Breast epithelium (tissue), 4 donors: ENCODE measurements at regions of chr1 and their contacts with region 1.

Region 1: GRCh38 chr1:36099681-36100341 is 11.1 kb downstream of the ADPRS start:
- DNase-seq: peak; percentile 64 to 77
- H3K4me3 ChIP-seq: peak overlapping the region in 1 of 3 donors; percentile 39
- H3K27ac ChIP-seq: peak overlapping the region in 1 of 2 donors; percentile 15
- H3K4me1 ChIP-seq: peaks cover 0 to under 1% of the 10 kb centered on the region in 2 donors
- H3K27me3 ChIP-seq: no peaks in the 10 kb centered on the region
- CTCF ChIP-seq: peak; percentile 87 to 92 (median 91)
- POLR2A ChIP-seq: no peak

Region 2: GRCh38 chr1:36285448-36286101 is 185.8 kb after region 1 on chr1:
- intact Hi-C with region 1: loop called (anchors 5 kb)
- DNase-seq: peak in 1 of 2 donors; percentile 75
- H3K4me3 ChIP-seq: no peak overlapping the region
- H3K27ac ChIP-seq: peak overlapping the region; percentile 26 to 52
- H3K4me1 ChIP-seq: peaks cover 0 to 4% of the 10 kb centered on the region in 2 donors
- H3K27me3 ChIP-seq: no peaks in the 10 kb centered on the region
- CTCF ChIP-seq: peak; percentile 38 to 73 (median 71)
- POLR2A ChIP-seq: no peak

Region 3: DNA sequence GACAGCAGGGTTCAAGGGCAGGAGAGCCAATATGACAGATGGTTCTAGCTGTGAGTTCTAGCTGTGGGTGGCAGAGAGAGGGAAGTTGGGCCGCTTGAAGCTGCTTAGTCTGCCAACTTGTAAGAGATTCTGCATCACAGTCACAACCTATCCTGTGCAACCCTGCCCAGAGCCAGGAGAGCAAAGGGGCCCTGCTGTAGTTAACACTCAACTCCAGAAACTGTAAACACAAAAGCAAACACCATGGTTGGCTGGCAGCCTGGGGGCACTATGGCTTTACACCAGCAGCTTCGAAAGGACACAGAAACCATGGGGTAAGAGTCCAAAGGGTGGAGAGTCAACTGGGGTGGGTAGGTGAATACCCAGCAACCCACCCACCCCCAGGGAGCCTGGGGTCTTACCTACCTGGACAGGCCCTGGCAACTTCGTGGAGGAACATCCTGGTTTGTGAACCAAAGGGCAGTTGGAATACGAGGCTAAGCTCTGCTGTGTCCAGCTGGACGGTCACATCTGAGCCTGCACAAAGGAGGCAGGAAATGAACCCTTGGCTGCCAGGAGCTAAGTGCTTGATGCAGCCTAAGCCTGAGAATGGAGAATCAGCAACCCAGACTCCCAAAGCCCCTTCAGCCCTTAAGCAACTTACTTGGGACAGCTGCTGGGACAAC is 1840.6 kb after region 1 on chr1:
- intact Hi-C with region 1: loop called (anchors 5 kb)
- DNase-seq: peak in 1 of 2 donors; percentile 67
- H3K4me3 ChIP-seq: no peak overlapping the region
- H3K27ac ChIP-seq: peak overlapping the region; percentile 33 to 49
- H3K4me1 ChIP-seq: no peaks in the 10 kb centered on the region
- H3K27me3 ChIP-seq: no peaks in the 10 kb centered on the region
- CTCF ChIP-seq: no peak
- POLR2A ChIP-seq: no peak